HepG2 (cell line): ENCODE measurements at regions of chr2 and their contacts with region 1.

Region 1: GRCh38 chr2:98385050-98385699 is 38.9 kb downstream of the CNGA3 start:
- DNase-seq: peak; percentile 79
- ATAC-seq: peak; percentile 95
- H3K4me3 ChIP-seq: no peak overlapping the region
- H3K27ac ChIP-seq: no peak overlapping the region
- H3K4me1 ChIP-seq: no peaks in the 10 kb centered on the region
- H3K27me3 ChIP-seq: peaks cover under 1 to 68% of the 10 kb centered on the region in 2 experiments; a peak in 4 of 5 replicates
- CTCF ChIP-seq: peak; percentile 98
- EP300 ChIP-seq: no peak
- POLR2A ChIP-seq: no peak
- RAD21 ChIP-seq: peak; percentile 95

Region 2: GRCh38 chr2:97740590-97741182 is 644.5 kb before region 1 on chr2:
- CTCF ChIA-PET with region 1: interaction called, 15 read pairs
- POLR2A ChIA-PET with region 1: no interaction called
- in situ Hi-C with region 1: no loop called
- intact Hi-C with region 1: loop called (anchors 1 kb)
- DNase-seq: peak; percentile 54
- ATAC-seq: peak; percentile 71
- H3K4me3 ChIP-seq: peak overlapping the region in 1 of 3 experiments; percentile 44; a peak in 1 of 6 replicates
- H3K27ac ChIP-seq: no peak overlapping the region
- H3K4me1 ChIP-seq: peaks cover 35% of the 10 kb centered on the region
- H3K27me3 ChIP-seq: peaks cover 2 to 27% of the 10 kb centered on the region in 2 experiments; a peak in 4 of 5 replicates
- CTCF ChIP-seq: peak; percentile 95
- EP300 ChIP-seq: no peak
- POLR2A ChIP-seq: no peak
- RAD21 ChIP-seq: peak; percentile 76

Region 3: DNA sequence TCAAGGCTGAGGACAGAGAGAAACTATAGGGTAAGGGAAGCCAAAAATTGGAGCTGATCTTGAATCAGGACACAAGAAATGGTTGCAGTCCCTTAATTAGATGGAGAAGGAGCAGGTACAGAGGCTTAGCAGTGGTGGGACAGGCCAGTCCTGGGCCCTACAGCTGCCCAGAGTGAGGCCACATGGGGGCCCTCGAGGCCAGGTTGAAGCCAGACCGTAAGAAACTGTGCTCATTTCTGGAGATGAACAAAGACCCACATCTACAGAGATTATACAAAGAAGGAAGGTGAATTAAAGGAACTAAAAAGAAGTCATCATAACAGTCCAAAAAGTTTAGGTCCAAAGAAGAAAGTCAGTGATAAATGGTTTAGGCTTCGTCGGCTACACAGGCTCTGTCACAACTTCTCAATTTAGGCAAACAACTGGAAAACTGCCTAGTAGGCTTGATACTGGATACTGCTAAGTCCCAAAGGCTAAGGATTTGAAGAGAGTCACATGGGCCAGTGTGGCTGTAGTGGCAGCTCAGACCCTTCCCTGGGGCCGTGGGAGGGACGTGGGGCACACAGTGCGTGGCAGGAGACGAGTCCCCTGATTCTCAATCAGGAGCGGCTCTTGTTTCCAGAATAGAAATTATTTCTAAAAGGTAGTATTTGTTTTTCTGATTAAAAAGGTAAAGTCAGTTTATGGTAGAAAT is 89.3 kb before region 1 on chr2:
- CTCF ChIA-PET with region 1: no interaction called
- POLR2A ChIA-PET with region 1: no interaction called
- in situ Hi-C with region 1: no loop called
- intact Hi-C with region 1: loop called (anchors 2 kb)
- DNase-seq: no peak
- ATAC-seq: peak; percentile 85
- H3K4me3 ChIP-seq: peak overlapping the region in 1 of 3 experiments; percentile 23; a peak in 1 of 6 replicates
- H3K27ac ChIP-seq: no peak overlapping the region
- H3K4me1 ChIP-seq: peaks cover 25% of the 10 kb centered on the region
- H3K27me3 ChIP-seq: peaks cover 10 to 27% of the 10 kb centered on the region in 2 experiments; a peak in 4 of 5 replicates
- CTCF ChIP-seq: peak; percentile 53
- EP300 ChIP-seq: no peak
- POLR2A ChIP-seq: no peak
- RAD21 ChIP-seq: no peak